A549 (cell line): ENCODE measurements at regions of chr17 and their contacts with region 1.

Region 1: DNA sequence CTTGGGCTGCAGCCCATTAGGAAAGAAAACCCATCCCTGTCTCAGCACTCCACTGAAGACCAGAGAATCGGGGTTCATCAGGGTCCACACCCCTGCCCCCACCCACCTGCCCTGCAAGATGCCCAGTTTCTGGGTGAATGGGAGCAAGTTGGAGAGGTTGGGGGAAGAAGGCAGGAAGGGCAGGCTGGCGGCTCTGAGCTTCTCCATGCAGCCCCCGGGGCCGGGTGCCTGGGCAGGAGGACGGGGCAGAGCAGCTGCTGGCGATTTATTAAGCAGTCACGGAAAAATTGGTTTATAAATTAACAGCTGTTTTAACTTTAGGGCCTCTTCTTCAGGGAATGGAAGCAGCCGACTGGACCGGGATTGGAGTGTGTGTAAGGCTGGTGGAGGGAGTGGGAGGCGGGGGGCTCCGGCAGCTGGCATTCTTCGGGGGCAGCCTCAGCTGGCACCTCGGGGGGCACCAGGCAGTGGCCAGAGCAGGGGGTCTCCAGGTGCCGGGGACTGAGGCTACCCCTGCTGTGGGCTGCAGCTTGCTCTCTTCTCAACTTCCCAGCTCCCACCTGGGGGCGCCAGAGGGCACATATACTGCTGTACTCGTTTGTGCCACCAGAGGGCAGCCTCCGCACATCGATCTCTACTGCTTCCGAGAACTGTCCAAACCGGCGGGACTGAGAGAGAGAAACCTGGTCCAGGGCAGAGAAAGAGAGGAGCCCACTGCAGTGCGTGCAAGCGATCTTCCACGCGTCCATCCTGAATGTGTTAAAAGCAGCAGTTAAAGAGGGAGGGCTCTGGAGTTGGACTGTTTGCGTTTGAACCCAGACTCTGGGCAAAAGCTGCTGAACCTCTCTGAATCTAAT is 5.0 kb upstream of the PPP1R1B start:
- DNase-seq: peak; percentile 86 to 94
- ATAC-seq: peak; percentile 44 to 77
- H3K4me3 ChIP-seq: peak overlapping the region; percentile 12; the same call in 1 of the 3 replicates
- H3K27ac ChIP-seq: 0 out of 6 replicates have a peak overlapping the region, but pooled peaks of 1 of the 2 experiments have one; percentile 5
- H3K4me1 ChIP-seq: peaks cover 15% of the 10 kb centered on the region
- CTCF ChIP-seq: peak; percentile 100
- EP300 ChIP-seq: no peak
- POLR2A ChIP-seq: no peak
- RAD21 ChIP-seq: peak; percentile 96 to 97

Region 2: GRCh38 chr17:39380144-39380543 is 241.6 kb before region 1 on chr17:
- CTCF ChIA-PET with region 1: no interaction called
- POLR2A ChIA-PET with region 1: no interaction called
- DNase-seq: no peak
- ATAC-seq: no peak
- H3K4me3 ChIP-seq: no peak overlapping the region
- H3K27ac ChIP-seq: no peak overlapping the region
- H3K4me1 ChIP-seq: no peaks in the 10 kb centered on the region; the same call in 2 of the 3 replicates
- CTCF ChIP-seq: no peak
- EP300 ChIP-seq: no peak
- POLR2A ChIP-seq: no peak
- RAD21 ChIP-seq: no peak

Region 3: GRCh38 chr17:39538866-39539265 is 82.9 kb before region 1 on chr17:
- CTCF ChIA-PET with region 1: interaction called, 533 read pairs
- POLR2A ChIA-PET with region 1: no interaction called
- DNase-seq: no peak
- ATAC-seq: no peak; a peak in 1 of 6 replicates
- H3K4me3 ChIP-seq: no peak overlapping the region
- H3K27ac ChIP-seq: no peak overlapping the region
- H3K4me1 ChIP-seq: no peaks in the 10 kb centered on the region
- CTCF ChIP-seq: no peak
- EP300 ChIP-seq: no peak
- POLR2A ChIP-seq: no peak
- RAD21 ChIP-seq: no peak

Region 4: DNA sequence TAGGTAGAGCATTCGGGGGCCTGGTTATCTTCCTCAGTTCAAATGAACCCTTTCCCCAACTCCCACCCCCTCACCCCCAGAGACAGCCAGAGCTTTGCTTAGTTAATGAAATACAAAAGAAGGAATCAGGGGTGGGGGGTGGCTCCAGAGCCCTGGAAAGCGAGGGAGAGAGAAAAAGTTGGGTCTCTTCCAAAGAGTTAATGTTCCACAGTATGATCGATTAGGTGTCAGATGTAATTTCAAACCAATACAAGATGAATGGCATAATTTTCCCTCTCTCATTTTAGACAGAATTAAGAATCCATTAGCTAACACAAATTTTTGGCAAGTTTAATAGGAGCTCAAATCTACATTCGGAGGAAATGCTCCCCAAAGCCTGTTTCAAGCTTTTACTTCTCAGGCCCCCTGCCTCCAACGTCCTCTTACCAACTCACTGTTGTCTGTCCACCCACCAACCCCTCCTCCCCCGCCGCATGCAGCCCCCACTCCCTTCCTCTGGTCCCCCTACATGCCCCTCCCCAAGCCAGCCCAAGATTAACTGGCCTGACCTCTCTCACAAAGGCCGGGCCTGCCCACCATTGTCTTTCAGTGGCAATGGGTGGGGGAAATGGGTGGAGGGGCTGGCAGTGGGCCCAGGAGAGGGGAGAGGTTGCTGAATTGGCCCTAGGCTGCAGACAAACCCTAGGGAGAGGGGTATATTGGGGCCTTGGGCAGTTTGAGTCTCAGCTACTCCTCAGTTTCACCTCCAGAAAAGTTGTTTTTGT is 42.3 kb before region 1 on chr17:
- CTCF ChIA-PET with region 1: interaction called, 118 read pairs
- POLR2A ChIA-PET with region 1: no interaction called
- DNase-seq: no peak
- ATAC-seq: no peak
- H3K4me3 ChIP-seq: no peak overlapping the region
- H3K27ac ChIP-seq: no peak overlapping the region
- H3K4me1 ChIP-seq: no peaks in the 10 kb centered on the region; the same call in 2 of the 3 replicates
- CTCF ChIP-seq: no peak
- EP300 ChIP-seq: no peak
- POLR2A ChIP-seq: no peak
- RAD21 ChIP-seq: no peak

Region 5: DNA sequence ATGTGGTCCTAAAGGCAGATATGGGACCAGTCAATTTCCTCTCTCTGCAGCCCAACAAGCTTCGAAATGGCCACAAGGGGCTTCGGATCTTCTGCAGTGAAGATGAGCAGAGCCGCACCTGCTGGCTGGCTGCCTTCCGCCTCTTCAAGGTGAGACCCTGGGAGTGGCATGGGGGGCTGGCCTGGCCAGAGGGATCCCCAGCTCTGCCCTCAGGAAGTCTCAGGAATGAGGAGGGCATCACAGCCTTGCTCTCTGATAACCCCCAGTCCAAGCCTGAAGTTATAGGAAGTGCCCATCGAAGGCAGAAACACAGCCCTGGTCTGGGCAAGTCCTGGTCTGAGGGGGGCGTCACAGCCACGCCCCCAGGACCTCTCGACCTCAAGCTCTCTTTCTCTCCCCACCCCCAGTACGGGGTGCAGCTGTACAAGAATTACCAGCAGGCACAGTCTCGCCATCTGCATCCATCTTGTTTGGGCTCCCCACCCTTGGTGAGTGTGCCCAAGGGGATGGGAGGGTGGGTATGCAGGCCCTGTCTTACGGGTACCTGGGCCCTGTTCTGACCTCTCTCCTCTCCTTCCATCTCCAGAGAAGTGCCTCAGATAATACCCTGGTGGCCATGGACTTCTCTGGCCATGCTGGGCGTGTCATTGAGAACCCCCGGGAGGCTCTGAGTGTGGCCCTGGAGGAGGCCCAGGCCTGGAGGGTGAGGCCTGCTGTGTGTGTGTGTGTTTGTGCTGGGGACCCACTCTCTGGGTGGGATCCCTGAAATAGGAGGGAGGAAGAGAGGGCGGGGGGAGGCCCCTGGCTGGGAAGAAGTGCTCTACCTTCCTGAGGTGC is 123.3 kb after region 1 on chr17:
- CTCF ChIA-PET with region 1: interaction called, 217 read pairs
- POLR2A ChIA-PET with region 1: no interaction called
- DNase-seq: no peak
- ATAC-seq: no peak
- H3K4me3 ChIP-seq: no peak overlapping the region
- H3K27ac ChIP-seq: no peak overlapping the region
- H3K4me1 ChIP-seq: peaks cover 21% of the 10 kb centered on the region
- CTCF ChIP-seq: no peak
- EP300 ChIP-seq: no peak
- POLR2A ChIP-seq: no peak
- RAD21 ChIP-seq: no peak

Region 6: GRCh38 chr17:39800540-39800939 is 178.8 kb after region 1 on chr17:
- CTCF ChIA-PET with region 1: interaction called, 16 read pairs
- POLR2A ChIA-PET with region 1: no interaction called
- DNase-seq: no peak
- ATAC-seq: no peak
- H3K4me3 ChIP-seq: no peak overlapping the region
- H3K27ac ChIP-seq: no peak overlapping the region
- H3K4me1 ChIP-seq: no peaks in the 10 kb centered on the region
- CTCF ChIP-seq: no peak
- EP300 ChIP-seq: no peak
- POLR2A ChIP-seq: no peak
- RAD21 ChIP-seq: no peak

Region 7: GRCh38 chr17:39943702-39944392 is 322.1 kb after region 1 on chr17:
- CTCF ChIA-PET with region 1: no interaction called
- POLR2A ChIA-PET with region 1: no interaction called
- DNase-seq: no peak
- ATAC-seq: no peak
- H3K4me3 ChIP-seq: no peak overlapping the region
- H3K27ac ChIP-seq: no peak overlapping the region
- H3K4me1 ChIP-seq: peaks cover 11% of the 10 kb centered on the region
- CTCF ChIP-seq: no peak
- EP300 ChIP-seq: no peak
- POLR2A ChIP-seq: no peak
- RAD21 ChIP-seq: no peak

Region 8: DNA sequence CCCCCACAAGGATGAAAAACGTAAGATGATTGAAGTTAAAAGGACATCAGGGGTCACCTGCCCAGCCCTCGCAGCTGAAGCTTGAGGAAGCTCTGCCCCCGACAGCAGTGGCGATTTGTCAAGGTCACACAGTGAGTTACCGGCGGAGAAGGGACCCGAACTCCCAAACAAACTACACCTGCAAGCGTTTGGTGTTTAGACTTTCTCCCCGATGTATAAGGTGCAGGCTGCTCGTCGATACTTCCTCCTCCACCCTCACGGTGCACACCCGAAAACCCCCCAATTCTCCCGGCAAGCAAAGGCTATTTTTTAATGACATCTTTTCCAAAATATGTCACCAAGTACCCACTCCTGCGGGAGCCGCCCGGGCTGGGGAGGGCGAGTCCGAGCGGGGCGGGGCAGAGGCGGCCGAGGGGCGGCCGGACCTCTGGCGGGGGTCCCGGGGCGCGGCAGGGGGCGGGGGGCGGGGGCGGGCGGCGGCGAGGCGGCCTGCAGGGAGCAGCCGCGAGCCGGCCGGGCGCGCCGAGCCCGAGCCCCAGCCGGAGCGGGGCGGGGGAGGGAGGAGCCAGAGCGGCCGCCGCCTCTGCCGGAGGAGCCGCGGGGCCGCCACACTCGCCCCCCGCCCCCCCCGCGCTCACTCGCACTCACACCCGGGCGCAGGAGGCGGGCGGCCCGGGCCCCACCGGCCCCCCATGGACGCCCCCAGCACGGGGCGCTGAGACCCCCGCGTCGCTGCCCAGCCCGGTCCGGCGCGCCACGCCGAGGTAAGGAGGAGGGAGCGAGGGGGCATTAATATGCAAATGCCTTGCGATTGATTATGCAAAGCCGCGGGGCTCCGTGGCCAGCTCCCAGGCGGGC is 440.8 kb after region 1 on chr17 and contains the start of gene THRA:
- CTCF ChIA-PET with region 1: no interaction called
- POLR2A ChIA-PET with region 1: no interaction called
- DNase-seq: peak in 1 of 2 experiments; percentile 68
- ATAC-seq: peak; percentile 65 to 70
- H3K4me3 ChIP-seq: peak within 1 kb of the TSS; percentile 98
- H3K27ac ChIP-seq: peak within 1 kb of the TSS; percentile 92 to 98
- H3K4me1 ChIP-seq: peaks cover 33% of the 10 kb centered on the region
- CTCF ChIP-seq: peak; percentile 86
- EP300 ChIP-seq: no peak
- POLR2A ChIP-seq: no peak
- RAD21 ChIP-seq: no peak; a peak in 3 of 5 replicates
- polyA plus RNA-seq, gene THRA: 20.1 and 27.4 TPM in 2 replicates